GM12878 (cell line): ENCODE measurements at regions of chr3 and their contacts with region 1.

Region 1: GRCh38 chr3:149566292-149566975 is 91.4 kb downstream of the WWTR1 start:
- DNase-seq: no peak
- ATAC-seq: no peak
- H3K4me3 ChIP-seq: no peak overlapping the region
- H3K27ac ChIP-seq: no peak overlapping the region
- H3K4me1 ChIP-seq: no peaks in the 10 kb centered on the region
- H3K27me3 ChIP-seq: no peaks in the 10 kb centered on the region
- CTCF ChIP-seq: no peak
- EP300 ChIP-seq: no peak
- POLR2A ChIP-seq: no peak
- RAD21 ChIP-seq: no peak

Region 2: DNA sequence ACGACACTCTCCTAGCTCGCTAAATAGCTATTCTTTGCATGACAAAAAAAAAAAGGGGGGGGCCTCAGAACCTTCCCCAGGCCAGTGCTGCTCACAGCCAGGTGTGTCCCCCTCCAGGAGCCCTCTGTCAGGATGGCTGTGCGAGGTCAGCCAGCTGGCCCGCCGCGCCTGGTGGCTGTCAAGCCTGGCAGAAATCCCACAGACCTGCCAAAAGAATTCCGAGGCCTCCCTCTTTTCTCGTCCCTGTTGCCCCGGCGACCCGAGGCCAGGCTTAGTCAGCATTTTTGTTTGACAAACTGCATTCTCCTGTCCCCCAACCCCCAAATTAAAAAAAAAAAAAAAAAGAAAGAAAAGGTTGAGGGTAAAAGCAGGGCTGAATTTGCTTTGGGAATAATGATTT is 30.0 kb before region 1 on chr3:
- CTCF ChIA-PET with region 1: interaction called, 108 read pairs
- POLR2A ChIA-PET with region 1: interaction called, 4 read pairs
- RAD21 ChIA-PET with region 1: interaction called, 77 read pairs
- SMC1A ChIA-PET with region 1: interaction called, 90 read pairs
- in situ Hi-C with region 1: no loop called
- intact Hi-C with region 1: no loop called
- DNase-seq: no peak
- ATAC-seq: no peak
- H3K4me3 ChIP-seq: no peak overlapping the region
- H3K27ac ChIP-seq: no peak overlapping the region
- H3K4me1 ChIP-seq: peaks cover 12% of the 10 kb centered on the region
- H3K27me3 ChIP-seq: no peaks in the 10 kb centered on the region
- CTCF ChIP-seq: no peak
- EP300 ChIP-seq: no peak
- POLR2A ChIP-seq: no peak
- RAD21 ChIP-seq: no peak

Region 3: GRCh38 chr3:149581681-149582370 is 15.4 kb after region 1 on chr3:
- CTCF ChIA-PET with region 1: interaction called, 147 read pairs
- POLR2A ChIA-PET with region 1: interaction called, 6 read pairs
- RAD21 ChIA-PET with region 1: interaction called, 88 read pairs
- SMC1A ChIA-PET with region 1: interaction called, 101 read pairs
- in situ Hi-C with region 1: no loop called
- intact Hi-C with region 1: no loop called
- DNase-seq: no peak
- ATAC-seq: peak; percentile 57
- H3K4me3 ChIP-seq: peak overlapping the region; percentile 52; the same call in 1 of the 2 replicates
- H3K27ac ChIP-seq: peak overlapping the region; percentile 63
- H3K4me1 ChIP-seq: peaks cover 73% of the 10 kb centered on the region
- H3K27me3 ChIP-seq: no peaks in the 10 kb centered on the region
- CTCF ChIP-seq: no peak
- EP300 ChIP-seq: 0 out of 4 replicates have a peak, but pooled peaks of 1 of the 2 experiments have one; percentile 21
- POLR2A ChIP-seq: no peak
- RAD21 ChIP-seq: no peak

Region 4: DNA sequence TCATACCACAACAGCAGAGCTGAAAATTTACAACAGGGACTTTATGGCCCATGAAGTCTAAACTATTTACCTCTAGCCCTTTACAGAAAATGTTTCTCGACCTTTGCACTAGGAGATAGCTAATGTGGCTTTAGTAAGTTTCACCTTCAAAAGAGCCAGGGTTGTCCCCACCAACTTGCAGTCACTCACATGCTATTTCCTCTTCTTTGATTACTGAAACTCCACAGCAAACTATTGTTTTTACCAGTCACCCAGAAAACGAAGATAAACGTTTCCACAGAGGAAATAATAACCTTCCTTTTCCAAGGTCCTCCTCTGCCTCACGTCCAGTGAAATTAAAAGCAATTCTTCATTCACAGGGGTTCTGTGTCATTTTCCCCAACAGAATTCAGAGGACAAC is 43.2 kb after region 1 on chr3:
- CTCF ChIA-PET with region 1: interaction called, 80 read pairs
- POLR2A ChIA-PET with region 1: interaction called, 3 read pairs
- RAD21 ChIA-PET with region 1: interaction called, 181 read pairs
- SMC1A ChIA-PET with region 1: interaction called, 505 read pairs
- in situ Hi-C with region 1: no loop called
- intact Hi-C with region 1: loop called (anchors 5 kb)
- DNase-seq: peak; percentile 81
- ATAC-seq: peak; percentile 97
- H3K4me3 ChIP-seq: no peak overlapping the region
- H3K27ac ChIP-seq: no peak overlapping the region
- H3K4me1 ChIP-seq: peaks cover 16% of the 10 kb centered on the region
- H3K27me3 ChIP-seq: no peaks in the 10 kb centered on the region
- CTCF ChIP-seq: no peak
- EP300 ChIP-seq: peak; percentile 62
- POLR2A ChIP-seq: no peak
- RAD21 ChIP-seq: no peak

Region 5: GRCh38 chr3:149657926-149658733 is 91.7 kb after region 1 on chr3 and contains the start of gene WWTR1:
- CTCF ChIA-PET with region 1: interaction called, 230 read pairs
- POLR2A ChIA-PET with region 1: interaction called, 34 read pairs
- RAD21 ChIA-PET with region 1: interaction called, 272 read pairs
- SMC1A ChIA-PET with region 1: interaction called, 205 read pairs
- in situ Hi-C with region 1: no loop called
- intact Hi-C with region 1: loop called (anchors 2 kb)
- DNase-seq: peak; percentile 54
- ATAC-seq: peak; percentile 85
- H3K4me3 ChIP-seq: peak within 1 kb of the TSS; percentile 87
- H3K27ac ChIP-seq: peak within 1 kb of the TSS; percentile 97
- H3K4me1 ChIP-seq: peaks cover 10% of the 10 kb centered on the region
- H3K27me3 ChIP-seq: no peaks in the 10 kb centered on the region
- CTCF ChIP-seq: peak; percentile 23 to 52 (median 43); a peak in 5 of 6 replicates
- EP300 ChIP-seq: 0 out of 4 replicates have a peak, but pooled peaks of 1 of the 2 experiments have one; percentile 18
- POLR2A ChIP-seq: peak; percentile 77
- RAD21 ChIP-seq: peak; percentile 54
- polyA plus RNA-seq, gene WWTR1: 3.8 to 4.0 TPM

Region 6: DNA sequence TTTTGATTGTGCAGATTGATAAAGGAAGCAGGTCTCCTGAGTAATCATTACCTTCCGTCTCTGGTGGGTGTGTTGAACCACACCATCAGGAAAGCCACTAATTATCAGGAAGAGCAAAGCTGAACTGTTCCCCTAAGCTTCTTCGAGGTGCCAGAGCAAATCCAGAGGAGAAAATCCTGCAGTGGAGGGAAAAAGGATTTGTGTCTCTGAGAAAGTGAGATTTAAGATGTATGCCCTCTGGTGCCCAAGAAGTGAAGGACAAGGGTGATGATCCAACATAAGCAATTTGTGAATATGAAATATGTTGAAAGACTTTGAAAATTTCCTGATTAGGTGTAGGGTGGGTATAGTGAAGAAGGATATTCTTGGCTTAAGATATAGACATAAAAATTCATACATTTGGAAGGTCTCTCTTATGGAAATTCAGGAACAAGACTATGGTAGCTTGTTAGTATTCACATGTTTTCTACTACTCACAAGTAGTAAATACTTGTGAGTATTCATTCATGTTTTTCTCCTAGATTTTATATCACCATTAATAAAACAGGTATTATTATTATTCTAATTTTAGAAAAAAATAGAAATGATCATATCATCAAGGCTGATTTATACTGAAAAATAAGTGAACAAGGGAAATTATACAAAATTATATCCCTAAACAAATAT is 151.1 kb after region 1 on chr3:
- CTCF ChIA-PET with region 1: interaction called, 253 read pairs
- POLR2A ChIA-PET with region 1: interaction called, 3 read pairs
- RAD21 ChIA-PET with region 1: interaction called, 122 read pairs
- SMC1A ChIA-PET with region 1: interaction called, 231 read pairs
- in situ Hi-C with region 1: loop called (anchors 5 kb)
- intact Hi-C with region 1: loop called (anchors 1 kb)
- DNase-seq: no peak
- ATAC-seq: peak; percentile 87
- H3K4me3 ChIP-seq: no peak overlapping the region
- H3K27ac ChIP-seq: no peak overlapping the region
- H3K4me1 ChIP-seq: no peaks in the 10 kb centered on the region
- H3K27me3 ChIP-seq: no peaks in the 10 kb centered on the region
- CTCF ChIP-seq: peak; percentile 64 to 70 (median 66)
- EP300 ChIP-seq: no peak
- POLR2A ChIP-seq: no peak
- RAD21 ChIP-seq: peak; percentile 78

Region 7: DNA sequence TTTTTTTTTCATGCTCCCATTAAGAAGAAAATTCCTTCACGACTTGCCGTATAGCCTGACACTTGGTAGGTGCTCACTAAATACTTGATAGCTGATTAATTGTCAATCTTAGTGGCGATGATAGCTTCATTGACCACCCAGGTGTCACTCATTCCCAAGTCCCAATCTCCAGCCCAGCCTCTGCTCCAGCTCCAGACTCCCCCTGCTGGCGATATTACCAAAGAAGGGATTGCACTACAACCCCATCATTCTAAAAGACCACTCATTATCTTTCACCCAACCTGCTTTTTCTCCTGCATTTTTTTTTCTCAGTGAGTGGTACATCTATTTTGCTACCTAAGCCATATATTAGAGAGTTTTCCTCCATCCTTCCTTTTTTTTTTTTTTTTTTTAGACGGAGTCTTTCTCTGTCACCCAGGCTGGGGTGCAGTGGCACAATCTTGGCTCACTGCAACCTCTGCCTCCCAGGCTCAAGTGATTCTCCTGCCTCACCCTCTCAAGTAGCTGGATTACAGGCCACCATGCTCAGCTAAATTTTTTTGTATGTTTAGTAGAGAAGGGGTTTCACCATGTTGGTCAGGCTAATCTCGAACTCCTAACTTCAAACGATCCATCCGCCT is 205.3 kb after region 1 on chr3:
- CTCF ChIA-PET with region 1: interaction called, 45 read pairs
- POLR2A ChIA-PET with region 1: no interaction called
- RAD21 ChIA-PET with region 1: interaction called, 27 read pairs
- SMC1A ChIA-PET with region 1: interaction called, 10 read pairs
- in situ Hi-C with region 1: no loop called
- intact Hi-C with region 1: no loop called
- DNase-seq: no peak
- ATAC-seq: peak; percentile 93
- H3K4me3 ChIP-seq: no peak overlapping the region
- H3K27ac ChIP-seq: no peak overlapping the region
- H3K4me1 ChIP-seq: no peaks in the 10 kb centered on the region
- H3K27me3 ChIP-seq: no peaks in the 10 kb centered on the region; a peak in 1 of 4 replicates
- CTCF ChIP-seq: peak; percentile 79 to 83 (median 79)
- EP300 ChIP-seq: no peak
- POLR2A ChIP-seq: no peak
- RAD21 ChIP-seq: peak; percentile 72